Esophagus muscularis mucosa (tissue), 4 donors: ENCODE measurements at regions of chr2 and their contacts with region 1.

Region 1: GRCh38 chr2:45699032-45699658 is 47.7 kb downstream of the PRKCE start:
- DNase-seq: no peak
- H3K4me3 ChIP-seq: no peak overlapping the region
- H3K27ac ChIP-seq: peak overlapping the region; percentile 24 to 69 (median 54)
- H3K4me1 ChIP-seq: peaks cover 14 to 48% (median 43%) of the 10 kb centered on the region in 4 donors
- H3K27me3 ChIP-seq: no peaks in the 10 kb centered on the region
- CTCF ChIP-seq: no peak
- EP300 ChIP-seq: no peak
- POLR2A ChIP-seq: no peak

Region 2: GRCh38 chr2:45199973-45200372 is 499.2 kb before region 1 on chr2:
- intact Hi-C with region 1: no loop called
- DNase-seq: peak; percentile 74
- H3K4me3 ChIP-seq: no peak overlapping the region
- H3K27ac ChIP-seq: no peak overlapping the region
- H3K4me1 ChIP-seq: no peaks in the 10 kb centered on the region
- H3K27me3 ChIP-seq: peaks cover 0 to 6% (median 0%) of the 10 kb centered on the region in 4 donors
- CTCF ChIP-seq: no peak
- EP300 ChIP-seq: no peak
- POLR2A ChIP-seq: no peak

Region 3: DNA sequence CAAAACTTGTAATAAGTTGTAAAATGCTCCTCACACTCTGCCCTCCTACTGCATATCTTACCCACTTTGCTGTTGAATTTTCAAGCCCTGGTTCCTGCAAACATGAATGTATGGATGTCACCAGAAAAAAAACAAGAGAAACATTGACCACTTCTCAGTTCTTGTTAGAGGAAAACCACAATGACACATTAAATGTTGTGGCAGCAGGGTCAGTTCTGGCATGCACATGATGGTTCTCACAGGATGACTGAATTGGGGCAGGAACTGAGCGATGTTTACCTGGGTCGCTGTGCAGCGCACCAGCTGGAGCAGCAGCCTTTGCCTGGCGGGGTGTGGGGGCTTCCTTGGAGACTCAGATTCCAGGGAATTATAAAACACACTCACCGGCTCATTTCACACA is 61.7 kb before region 1 on chr2:
- intact Hi-C with region 1: no loop called
- DNase-seq: no peak
- H3K4me3 ChIP-seq: no peak overlapping the region
- H3K27ac ChIP-seq: no peak overlapping the region
- H3K4me1 ChIP-seq: no peaks in the 10 kb centered on the region
- H3K27me3 ChIP-seq: peaks cover 0 to 8% (median 0%) of the 10 kb centered on the region in 4 donors
- CTCF ChIP-seq: no peak
- EP300 ChIP-seq: no peak
- POLR2A ChIP-seq: no peak

Region 4: GRCh38 chr2:45659176-45659575 is 40.0 kb before region 1 on chr2:
- intact Hi-C with region 1: loop called (anchors 5 kb)
- DNase-seq: no peak
- H3K4me3 ChIP-seq: no peak overlapping the region
- H3K27ac ChIP-seq: no peak overlapping the region
- H3K4me1 ChIP-seq: peaks cover 4 to 41% (median 32%) of the 10 kb centered on the region in 4 donors
- H3K27me3 ChIP-seq: no peaks in the 10 kb centered on the region
- CTCF ChIP-seq: no peak
- EP300 ChIP-seq: no peak
- POLR2A ChIP-seq: no peak

Region 5: GRCh38 chr2:45778720-45779171 is 79.6 kb after region 1 on chr2:
- intact Hi-C with region 1: no loop called
- DNase-seq: no peak
- H3K4me3 ChIP-seq: no peak overlapping the region
- H3K27ac ChIP-seq: no peak overlapping the region
- H3K4me1 ChIP-seq: peaks cover 6 to 71% (median 49%) of the 10 kb centered on the region in 4 donors
- H3K27me3 ChIP-seq: no peaks in the 10 kb centered on the region
- CTCF ChIP-seq: peak; percentile 77 to 82 (median 79)
- EP300 ChIP-seq: no peak
- POLR2A ChIP-seq: no peak